ENCODE measurements at regions of chr6 and their contacts with region 1.

Region 1: GRCh38 chr6:158220786-158221442 is 52.8 kb downstream of the GTF2H5 start:
- DNase-seq: peak; percentile 85
- H3K4me3 ChIP-seq: no peak overlapping the region; a peak in 1 of 4 replicates
- H3K27ac ChIP-seq: no peak overlapping the region
- H3K4me1 ChIP-seq: peaks cover 0 to 3% of the 10 kb centered on the region in 2 experiments; a peak in 1 of 4 replicates
- H3K27me3 ChIP-seq: no peaks in the 10 kb centered on the region
- CTCF ChIP-seq: peak; percentile 93
- EP300 ChIP-seq: no peak
- RAD21 ChIP-seq: peak; percentile 99

Region 2: DNA sequence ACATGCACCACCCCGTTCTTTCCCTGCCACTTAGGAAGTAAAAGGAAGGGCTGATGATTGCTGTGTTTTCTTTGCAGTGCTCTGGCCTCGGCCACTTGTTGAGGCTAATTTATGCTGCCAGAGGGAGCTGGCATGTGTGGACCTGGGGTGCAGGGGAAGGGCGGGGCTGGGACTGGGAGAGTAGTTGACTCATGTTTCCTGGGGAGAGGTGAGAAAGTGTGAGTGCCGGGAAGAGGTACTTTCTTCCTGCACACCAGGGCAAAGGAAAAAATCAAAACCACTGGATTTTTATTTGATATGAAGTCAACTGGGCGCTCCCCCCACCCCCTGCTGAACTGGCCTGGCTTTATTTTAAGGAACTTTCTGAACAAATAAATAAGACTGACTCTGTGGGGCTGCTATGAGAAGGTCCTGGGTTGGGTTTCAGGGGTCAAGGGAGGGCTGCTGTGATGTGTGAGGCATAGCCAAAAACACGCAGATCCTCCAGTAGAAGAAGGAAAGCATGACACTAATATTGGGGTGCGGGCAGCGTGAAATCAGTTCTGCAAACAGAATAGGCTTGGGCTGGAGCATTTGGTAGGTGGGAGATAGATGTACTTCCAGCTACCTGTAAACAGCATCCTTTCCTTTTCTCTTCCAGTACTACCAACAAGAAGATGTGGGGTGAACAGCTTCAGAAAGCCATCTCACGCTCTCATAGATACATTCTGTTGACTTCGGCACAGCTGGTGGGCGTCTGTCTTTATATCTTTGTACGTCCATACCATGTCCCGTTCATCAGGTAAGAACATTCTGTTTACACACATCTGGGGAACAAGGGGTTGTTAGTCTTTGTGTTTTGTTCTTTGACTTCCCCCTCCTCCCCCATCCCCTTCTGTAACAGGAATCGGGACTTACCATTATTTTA is 151.8 kb before region 1 on chr6:
- CTCF ChIA-PET with region 1: no interaction called
- POLR2A ChIA-PET with region 1: no interaction called
- DNase-seq: no peak
- H3K4me3 ChIP-seq: no peak overlapping the region
- H3K27ac ChIP-seq: peak overlapping the region; percentile 28 to 76; a peak in 3 of 4 replicates
- H3K4me1 ChIP-seq: peaks cover 11 to 30% of the 10 kb centered on the region in 2 experiments; a peak in 3 of 4 replicates
- H3K27me3 ChIP-seq: no peaks in the 10 kb centered on the region
- CTCF ChIP-seq: no peak
- EP300 ChIP-seq: peak; percentile 15 to 62; a peak in 1 of 4 replicates
- RAD21 ChIP-seq: no peak

Region 3: DNA sequence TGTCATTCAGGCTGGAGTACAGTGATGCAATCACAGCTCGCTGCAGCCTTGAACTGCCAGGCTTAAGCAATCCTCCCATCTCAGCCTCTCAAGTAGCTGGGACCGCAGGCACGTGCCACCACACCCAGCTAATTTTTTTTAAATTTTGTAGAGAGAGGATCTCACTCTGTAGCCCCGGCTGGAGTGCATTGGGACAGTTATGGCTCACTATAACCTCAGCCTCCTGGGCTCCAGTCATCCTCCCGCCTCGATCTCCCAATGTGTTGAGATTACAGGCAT is 139.3 kb before region 1 on chr6:
- CTCF ChIA-PET with region 1: no interaction called
- POLR2A ChIA-PET with region 1: no interaction called
- DNase-seq: no peak
- H3K4me3 ChIP-seq: no peak overlapping the region
- H3K27ac ChIP-seq: no peak overlapping the region
- H3K4me1 ChIP-seq: no peaks in the 10 kb centered on the region
- H3K27me3 ChIP-seq: no peaks in the 10 kb centered on the region
- CTCF ChIP-seq: no peak
- EP300 ChIP-seq: no peak
- RAD21 ChIP-seq: no peak

Region 4: GRCh38 chr6:158231551-158232315 is 10.8 kb after region 1 on chr6:
- CTCF ChIA-PET with region 1: interaction called, 22 read pairs
- POLR2A ChIA-PET with region 1: interaction called, 3 read pairs
- DNase-seq: peak; percentile 97
- H3K4me3 ChIP-seq: peak overlapping the region; percentile 60 to 69
- H3K27ac ChIP-seq: peak overlapping the region; percentile 86 to 89
- H3K4me1 ChIP-seq: peaks cover 14 to 15% of the 10 kb centered on the region in 2 experiments; a peak in 3 of 4 replicates
- H3K27me3 ChIP-seq: no peaks in the 10 kb centered on the region
- CTCF ChIP-seq: no peak
- EP300 ChIP-seq: no peak
- RAD21 ChIP-seq: no peak

Region 5: DNA sequence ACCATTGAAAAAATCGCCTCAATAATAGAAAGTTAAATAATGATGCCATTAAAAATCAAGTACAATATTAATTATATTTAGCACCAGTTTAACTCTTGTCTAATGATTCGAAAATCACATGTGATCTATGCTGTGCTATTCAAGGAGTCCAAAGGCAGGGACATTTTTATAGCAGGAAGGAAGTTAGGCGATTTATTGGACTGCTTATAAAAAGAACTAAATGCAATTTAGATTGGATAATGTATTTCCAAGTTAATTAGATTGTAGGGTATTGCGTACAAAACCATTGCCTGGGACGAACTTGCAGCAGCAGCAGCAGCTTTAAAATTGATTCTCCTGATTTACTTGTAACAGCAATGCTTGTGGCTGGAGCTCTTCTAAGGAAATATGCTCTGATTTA is 251.5 kb after region 1 on chr6:
- CTCF ChIA-PET with region 1: interaction called, 10 read pairs
- POLR2A ChIA-PET with region 1: no interaction called
- DNase-seq: peak; percentile 43
- H3K4me3 ChIP-seq: no peak overlapping the region
- H3K27ac ChIP-seq: peak overlapping the region in 1 of 2 experiments; percentile 16; a peak in 1 of 4 replicates
- H3K4me1 ChIP-seq: peaks cover 12 to 22% of the 10 kb centered on the region in 2 experiments
- H3K27me3 ChIP-seq: no peaks in the 10 kb centered on the region
- CTCF ChIP-seq: no peak
- EP300 ChIP-seq: no peak
- RAD21 ChIP-seq: no peak

Region 6: GRCh38 chr6:158554611-158555361 is 333.9 kb after region 1 on chr6:
- CTCF ChIA-PET with region 1: interaction called, 14 read pairs
- POLR2A ChIA-PET with region 1: no interaction called
- DNase-seq: no peak
- H3K4me3 ChIP-seq: no peak overlapping the region
- H3K27ac ChIP-seq: peak overlapping the region in 1 of 2 experiments; percentile 34; a peak in 2 of 4 replicates
- H3K4me1 ChIP-seq: peaks cover 0 to 8% of the 10 kb centered on the region in 2 experiments; a peak in 2 of 4 replicates
- H3K27me3 ChIP-seq: no peaks in the 10 kb centered on the region
- CTCF ChIP-seq: no peak
- EP300 ChIP-seq: no peak
- RAD21 ChIP-seq: no peak

Region 7: DNA sequence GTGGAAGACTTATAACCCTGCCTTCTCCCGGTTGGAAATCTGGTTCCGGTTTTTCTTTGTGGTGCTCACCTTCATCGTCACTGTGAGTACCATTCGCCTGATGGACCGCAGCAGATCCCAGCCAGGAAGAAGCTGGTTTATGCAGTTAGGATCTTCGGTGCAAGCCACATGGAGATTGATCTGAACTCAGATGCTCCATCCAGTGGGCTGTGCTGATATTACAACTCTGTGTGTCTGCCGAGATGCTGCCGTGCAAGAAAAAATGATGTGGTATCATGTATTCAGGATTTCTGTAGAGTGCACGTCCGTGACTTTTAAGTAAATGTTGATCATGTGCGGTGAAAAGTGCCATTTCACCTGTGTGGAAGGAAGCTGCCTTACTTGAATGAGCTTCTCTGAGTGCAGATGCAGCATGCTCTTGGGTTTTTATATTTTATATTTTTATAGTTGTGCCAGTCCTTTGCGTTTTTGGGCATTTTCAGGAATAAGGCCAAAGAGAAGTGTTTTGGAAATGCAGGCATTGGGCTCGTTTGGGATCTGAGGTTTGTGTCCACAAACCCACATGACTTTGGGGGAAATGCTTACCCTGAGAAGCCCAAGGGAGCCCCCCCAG is 384.5 kb after region 1 on chr6:
- CTCF ChIA-PET with region 1: interaction called, 27 read pairs
- POLR2A ChIA-PET with region 1: interaction called, 4 read pairs
- DNase-seq: peak; percentile 85
- H3K4me3 ChIP-seq: no peak overlapping the region
- H3K27ac ChIP-seq: no peak overlapping the region
- H3K4me1 ChIP-seq: peaks cover 0 to 15% of the 10 kb centered on the region in 2 experiments; a peak in 2 of 4 replicates
- H3K27me3 ChIP-seq: no peaks in the 10 kb centered on the region
- CTCF ChIP-seq: peak; percentile 74
- EP300 ChIP-seq: no peak
- RAD21 ChIP-seq: peak; percentile 79

Region 8: GRCh38 chr6:158644231-158645063 is 423.5 kb after region 1 on chr6 and contains the start of gene DYNLT1:
- CTCF ChIA-PET with region 1: interaction called, 10 read pairs
- POLR2A ChIA-PET with region 1: no interaction called
- DNase-seq: peak; percentile 98
- H3K4me3 ChIP-seq: peak within 1 kb of the TSS; percentile 76 to 96
- H3K27ac ChIP-seq: peak within 1 kb of the TSS; percentile 94 to 95
- H3K4me1 ChIP-seq: peaks cover 20 to 30% of the 10 kb centered on the region in 2 experiments
- H3K27me3 ChIP-seq: no peaks in the 10 kb centered on the region
- CTCF ChIP-seq: no peak
- EP300 ChIP-seq: no peak
- RAD21 ChIP-seq: peak; percentile 33
- polyA plus RNA-seq, gene DYNLT1: 306 and 390 TPM in 2 replicates

Region 9: GRCh38 chr6:158910484-158911348 is 689.8 kb after region 1 on chr6:
- CTCF ChIA-PET with region 1: no interaction called
- POLR2A ChIA-PET with region 1: no interaction called
- DNase-seq: no peak
- H3K4me3 ChIP-seq: no peak overlapping the region
- H3K27ac ChIP-seq: no peak overlapping the region
- H3K4me1 ChIP-seq: no peaks in the 10 kb centered on the region; a peak in 1 of 4 replicates
- H3K27me3 ChIP-seq: no peaks in the 10 kb centered on the region
- CTCF ChIP-seq: no peak
- EP300 ChIP-seq: no peak
- RAD21 ChIP-seq: no peak